Caco-2 (cell line): ENCODE measurements at regions of chr19 and their contacts with region 1.

Region 1: GRCh38 chr19:48835734-48836088 is 580 bp downstream of the HSD17B14 start:
- DNase-seq: peak; percentile 97
- H3K4me3 ChIP-seq: peak overlapping the region; percentile 63
- H3K4me3 Mint-ChIP-seq: peak overlapping the region; percentile 92
- H3K27ac Mint-ChIP-seq: peak overlapping the region; percentile 90
- H3K4me1 ChIP-seq: peaks cover 4% of the 10 kb centered on the region
- H3K4me1 Mint-ChIP-seq: no peaks in the 10 kb centered on the region
- H3K27me3 ChIP-seq: no peaks in the 10 kb centered on the region
- H3K27me3 Mint-ChIP-seq: no peaks in the 10 kb centered on the region
- CTCF ChIP-seq: peak; percentile 93 to 97

Region 2: DNA sequence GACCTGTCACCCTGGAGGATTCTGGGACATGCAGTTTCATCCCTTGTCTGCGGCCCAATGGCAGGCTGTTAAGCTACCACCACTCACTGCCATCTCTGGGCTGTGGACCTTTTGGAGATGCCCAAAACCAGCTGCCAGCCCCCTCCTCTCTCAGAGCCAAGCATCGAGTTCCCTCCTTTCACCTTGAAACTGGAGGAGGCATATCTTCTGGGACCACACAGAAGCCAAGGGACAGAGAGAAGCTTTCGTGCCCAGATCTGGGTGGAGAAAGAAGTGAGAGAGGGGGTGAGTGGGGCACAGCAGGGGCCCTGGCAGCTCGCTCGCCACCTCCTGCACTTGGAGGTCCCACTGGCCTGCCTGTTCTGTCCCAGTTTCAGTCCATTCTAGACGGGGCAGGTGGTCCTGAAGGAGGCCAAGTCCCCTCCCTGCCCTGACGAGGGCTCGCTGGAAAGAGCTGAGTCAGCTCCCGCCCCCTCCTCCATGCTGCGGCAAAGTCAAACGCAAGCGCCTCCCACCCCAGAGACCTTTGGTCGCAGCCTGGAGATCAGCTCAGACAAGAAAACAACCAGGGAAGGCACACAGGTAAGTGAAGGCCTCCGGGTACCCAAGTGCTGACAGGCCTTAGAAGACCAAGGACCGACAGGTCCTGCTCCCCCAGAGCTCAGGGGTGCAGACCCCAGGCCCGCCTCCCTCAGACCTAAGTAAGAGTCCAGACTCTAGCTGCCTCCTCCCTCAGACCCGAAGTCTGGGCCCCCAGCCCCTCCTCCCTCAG is 28.7 kb before region 1 on chr19:
- CTCF ChIA-PET with region 1: interaction called, 10 read pairs
- POLR2A ChIA-PET with region 1: no interaction called
- intact Hi-C with region 1: loop called (anchors 1 kb)
- DNase-seq: peak; percentile 83 to 85
- H3K4me3 ChIP-seq: peak overlapping the region; percentile 28
- H3K4me3 Mint-ChIP-seq: peak overlapping the region; percentile 30
- H3K27ac Mint-ChIP-seq: peak overlapping the region; percentile 7
- H3K4me1 ChIP-seq: peaks cover 25% of the 10 kb centered on the region
- H3K4me1 Mint-ChIP-seq: peaks cover 30% of the 10 kb centered on the region
- H3K27me3 ChIP-seq: no peaks in the 10 kb centered on the region
- H3K27me3 Mint-ChIP-seq: no peaks in the 10 kb centered on the region
- CTCF ChIP-seq: no peak

Region 3: GRCh38 chr19:48812094-48812929 is 23.4 kb before region 1 on chr19:
- CTCF ChIA-PET with region 1: interaction called, 10 read pairs
- POLR2A ChIA-PET with region 1: no interaction called
- intact Hi-C with region 1: loop called (anchors 1 kb)
- DNase-seq: peak; percentile 89 to 92
- H3K4me3 ChIP-seq: peak overlapping the region; percentile 83
- H3K4me3 Mint-ChIP-seq: peak overlapping the region; percentile 79
- H3K27ac Mint-ChIP-seq: peak overlapping the region; percentile 64
- H3K4me1 ChIP-seq: peaks cover 26% of the 10 kb centered on the region
- H3K4me1 Mint-ChIP-seq: peaks cover 33% of the 10 kb centered on the region
- H3K27me3 ChIP-seq: no peaks in the 10 kb centered on the region
- H3K27me3 Mint-ChIP-seq: no peaks in the 10 kb centered on the region
- CTCF ChIP-seq: no peak

Region 4: GRCh38 chr19:48858984-48859710 is 23.4 kb after region 1 on chr19:
- CTCF ChIA-PET with region 1: no interaction called
- POLR2A ChIA-PET with region 1: no interaction called
- intact Hi-C with region 1: no loop called
- DNase-seq: no peak
- H3K4me3 ChIP-seq: no peak overlapping the region
- H3K4me3 Mint-ChIP-seq: no peak overlapping the region
- H3K27ac Mint-ChIP-seq: no peak overlapping the region
- H3K4me1 ChIP-seq: peaks cover 3% of the 10 kb centered on the region
- H3K4me1 Mint-ChIP-seq: no peaks in the 10 kb centered on the region
- H3K27me3 ChIP-seq: no peaks in the 10 kb centered on the region
- H3K27me3 Mint-ChIP-seq: no peaks in the 10 kb centered on the region
- CTCF ChIP-seq: no peak